Right cardiac atrium (tissue), 5 donors: ENCODE measurements at regions of chr6 and their contacts with region 1.

Region 1: DNA sequence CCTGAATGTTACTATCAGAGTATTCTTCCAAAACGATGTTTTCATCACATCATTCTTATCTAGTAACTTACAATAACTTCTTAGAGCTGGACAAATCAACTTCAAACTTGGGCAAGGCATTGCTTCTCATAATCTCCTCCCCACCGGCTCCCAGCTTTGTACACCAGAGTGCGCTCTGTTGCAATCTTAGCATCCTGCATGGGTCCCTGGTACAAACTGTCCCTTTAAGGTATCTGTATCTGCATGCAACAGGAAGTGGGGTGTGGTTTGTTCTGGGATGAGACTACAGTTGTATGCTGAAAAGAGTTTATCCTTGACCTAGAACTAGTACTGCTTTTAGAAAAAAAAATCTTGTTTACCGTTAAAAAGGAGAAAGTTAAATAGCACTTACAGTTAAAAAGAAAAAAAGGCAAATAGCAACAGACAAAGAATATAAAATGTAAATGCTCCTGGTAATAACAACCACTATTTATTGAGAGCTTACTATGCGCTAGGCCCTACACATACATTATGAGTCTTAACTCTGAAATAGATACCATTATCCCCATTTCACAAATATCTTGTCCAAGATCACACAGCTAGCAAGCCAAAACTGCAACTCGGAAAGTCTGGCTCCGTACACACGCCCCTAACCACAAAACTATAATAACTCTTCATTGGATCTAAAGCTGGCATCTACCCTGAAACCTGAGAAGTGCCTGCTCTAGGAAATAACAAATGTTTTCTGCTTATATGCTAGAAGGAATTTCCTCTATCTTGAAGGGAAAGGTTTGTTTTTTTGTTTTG is 9.8 kb upstream of the HECA start:
- DNase-seq: peak; percentile 59 to 84 (median 74)
- ATAC-seq: peak; percentile 98 to 100
- H3K4me3 ChIP-seq: no peak overlapping the region
- H3K27ac ChIP-seq: no peak overlapping the region
- H3K4me1 ChIP-seq: no peaks in the 10 kb centered on the region
- H3K27me3 ChIP-seq: no peaks in the 10 kb centered on the region

Region 2: DNA sequence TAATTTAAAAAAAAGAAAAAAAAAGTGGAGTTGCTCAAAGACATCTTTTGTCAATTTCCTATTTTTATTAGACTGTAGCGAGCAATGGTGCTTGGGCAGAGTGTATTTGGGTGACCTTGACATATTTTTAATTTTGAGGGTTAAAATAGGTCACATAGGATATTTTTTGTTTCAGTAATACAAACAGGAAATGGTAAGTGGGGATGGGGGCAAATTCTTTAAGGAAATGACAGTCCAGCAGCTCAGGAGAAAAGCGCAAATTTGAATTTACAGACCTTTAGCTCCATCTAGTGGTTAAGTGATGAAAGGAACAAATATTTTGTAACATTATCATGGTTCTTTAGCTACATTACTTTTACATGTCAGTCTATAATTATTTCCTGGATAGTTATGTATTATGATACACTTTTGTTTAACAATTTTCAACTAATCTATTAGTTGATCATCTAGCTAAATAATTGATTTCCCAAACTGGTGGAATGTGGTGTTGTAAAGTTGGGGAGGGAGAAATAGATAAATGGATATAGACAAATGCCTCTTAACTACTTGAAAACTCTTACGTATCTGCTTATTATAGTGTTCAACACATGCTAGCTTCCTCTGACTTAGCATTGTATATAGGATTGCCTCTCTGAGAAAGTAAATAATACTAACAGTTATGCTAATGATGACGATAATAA is 239.4 kb after region 1 on chr6:
- intact Hi-C with region 1: loop called in 2 of 4 experiments (anchors 5 kb)
- DNase-seq: no peak
- ATAC-seq: peak in 1 of 2 donors; percentile 36
- H3K4me3 ChIP-seq: no peak overlapping the region
- H3K27ac ChIP-seq: no peak overlapping the region
- H3K4me1 ChIP-seq: no peaks in the 10 kb centered on the region
- H3K27me3 ChIP-seq: no peaks in the 10 kb centered on the region

Region 3: DNA sequence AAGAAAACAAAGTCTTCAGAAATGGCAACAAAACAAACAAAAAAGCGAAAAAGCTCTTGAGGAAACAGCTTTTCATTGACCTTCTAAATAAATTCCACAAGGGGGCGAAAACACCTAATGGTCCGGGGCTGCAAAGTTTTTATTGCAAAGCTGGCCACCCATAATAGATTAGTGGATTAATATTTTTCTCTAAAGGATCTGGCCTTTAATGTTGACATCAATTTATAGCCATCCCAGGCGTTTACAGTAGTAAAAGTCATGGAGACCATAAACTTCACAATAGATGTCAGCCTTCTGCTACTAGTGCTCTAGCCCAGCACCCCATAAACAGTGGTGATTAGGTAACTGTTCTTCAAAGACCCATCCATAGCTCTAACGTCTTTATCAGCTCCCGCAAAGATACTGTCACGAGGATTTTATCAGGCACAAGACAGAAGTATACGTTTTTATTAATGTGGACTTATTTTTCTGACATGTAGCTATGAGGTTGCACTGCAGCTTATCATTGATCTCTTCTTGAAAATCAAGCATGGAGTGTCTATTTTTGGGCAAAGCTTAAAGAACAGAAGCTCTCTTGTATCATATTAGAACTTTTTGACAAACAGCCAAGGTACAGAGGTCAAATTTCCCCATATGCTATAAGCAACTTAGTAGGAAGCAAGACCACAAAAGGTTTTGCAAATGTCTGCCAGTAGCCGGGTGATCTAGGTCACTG is 244.6 kb after region 1 on chr6:
- intact Hi-C with region 1: loop called in 2 of 4 experiments (anchors 5 kb)
- DNase-seq: no peak
- ATAC-seq: no peak
- H3K4me3 ChIP-seq: no peak overlapping the region
- H3K27ac ChIP-seq: peak overlapping the region; percentile 65
- H3K4me1 ChIP-seq: no peaks in the 10 kb centered on the region
- H3K27me3 ChIP-seq: no peaks in the 10 kb centered on the region